CD4-positive, alpha-beta memory T cell (primary cell): ENCODE measurements at regions of chr6 and their contacts with region 1.

Region 1: GRCh38 chr6:152184917-152185574 is 377.6 kb downstream of the ESR1 start:
- DNase-seq: peak; percentile 46 to 66 (median 62)
- H3K4me3 ChIP-seq: peak overlapping the region; percentile 39 to 76
- H3K4me3 Mint-ChIP-seq: peak overlapping the region; percentile 87 to 98 (median 96)
- H3K27ac ChIP-seq: peak overlapping the region; percentile 77
- H3K27ac Mint-ChIP-seq: peak overlapping the region; percentile 90 to 99 (median 98)
- H3K4me1 ChIP-seq: peaks cover 54% of the 10 kb centered on the region
- H3K4me1 Mint-ChIP-seq: peaks cover 50 to 85% (median 68%) of the 10 kb centered on the region in 4 donors
- H3K27me3 ChIP-seq: no peaks in the 10 kb centered on the region
- H3K27me3 Mint-ChIP-seq: no peaks in the 10 kb centered on the region

Region 2: DNA sequence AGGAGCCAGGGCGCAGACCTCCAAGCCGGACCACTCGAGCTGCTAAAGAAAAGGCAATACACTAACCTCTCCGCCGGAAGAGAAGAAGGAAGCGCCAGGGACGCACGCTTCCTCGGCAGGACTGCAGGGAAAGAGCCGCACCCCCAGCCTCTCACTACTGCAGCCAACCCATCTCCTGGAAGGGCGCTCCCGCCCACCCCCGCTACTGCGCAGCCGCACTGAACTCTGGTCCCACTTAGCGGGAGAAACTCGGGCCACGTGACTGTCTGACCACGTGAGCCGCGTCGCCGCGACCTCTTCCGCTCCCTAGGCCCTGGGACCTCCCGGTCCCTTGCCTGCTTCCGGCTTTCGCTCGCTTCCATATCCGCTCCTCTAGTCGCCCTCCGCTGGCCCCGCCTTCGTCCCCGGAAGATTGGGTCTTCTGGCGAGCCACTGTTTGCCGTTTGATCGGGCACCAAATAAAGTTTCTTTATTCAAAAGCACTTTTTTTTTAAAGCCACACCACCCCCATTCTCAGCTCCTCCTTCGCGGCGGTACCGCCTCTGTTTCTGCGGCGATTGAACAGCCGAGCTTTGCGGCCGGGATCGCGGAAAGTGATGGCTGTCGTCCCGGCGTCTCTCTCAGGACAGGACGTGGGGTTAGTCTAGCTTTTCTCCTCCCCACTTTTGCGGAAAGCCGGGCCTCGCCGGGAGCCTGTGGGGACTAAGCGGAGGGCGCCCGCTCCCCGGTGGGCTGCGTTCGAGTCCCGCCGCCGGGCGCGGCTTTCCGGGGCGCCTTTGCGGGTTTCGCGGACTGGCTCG is 732.9 kb before region 1 on chr6 and contains the start of gene RMND1:
- CTCF ChIA-PET with region 1: no interaction called
- POLR2A ChIA-PET with region 1: interaction called, 10 read pairs
- intact Hi-C with region 1: no loop called
- DNase-seq: peak; percentile 98 to 100 (median 99)
- H3K4me3 ChIP-seq: peak within 1 kb of the TSS; percentile 85 to 99
- H3K4me3 Mint-ChIP-seq: peak within 1 kb of the TSS; percentile 91 to 98 (median 97)
- H3K27ac ChIP-seq: peak within 1 kb of the TSS; percentile 72
- H3K27ac Mint-ChIP-seq: peak within 1 kb of the TSS; percentile 93 to 99 (median 96)
- H3K4me1 ChIP-seq: peaks cover 32% of the 10 kb centered on the region
- H3K4me1 Mint-ChIP-seq: peaks cover 27 to 68% (median 53%) of the 10 kb centered on the region in 4 donors
- H3K27me3 ChIP-seq: no peaks in the 10 kb centered on the region
- H3K27me3 Mint-ChIP-seq: peaks cover 0 to 2% of the 10 kb centered on the region in 2 donors
- total RNA-seq, gene RMND1: 17.0 to 17.5 TPM

Region 3: DNA sequence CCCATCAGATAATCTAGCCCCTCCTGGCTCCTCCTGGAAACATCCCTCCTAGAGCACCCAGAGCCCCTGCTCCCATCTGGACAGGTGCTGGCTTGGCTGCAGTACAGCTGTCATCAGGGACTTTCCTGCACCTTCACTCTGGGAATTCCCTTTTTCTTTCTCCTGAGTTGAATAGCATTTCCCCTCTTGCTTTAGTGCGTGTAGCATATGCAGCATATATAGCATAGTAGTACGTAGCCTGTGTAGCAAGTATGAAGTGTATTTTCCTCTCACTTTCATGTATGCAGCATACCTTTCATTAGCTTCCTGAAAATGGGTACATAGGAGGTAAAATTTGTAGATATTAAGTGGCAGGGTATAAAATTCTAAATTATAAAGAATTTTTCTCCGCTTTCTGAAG is 24.7 kb before region 1 on chr6:
- CTCF ChIA-PET with region 1: no interaction called
- POLR2A ChIA-PET with region 1: interaction called, 31 read pairs
- intact Hi-C with region 1: no loop called
- DNase-seq: peak in 2 of 5 donors; percentile 5 to 37
- H3K4me3 ChIP-seq: no peak overlapping the region
- H3K4me3 Mint-ChIP-seq: no peak overlapping the region
- H3K27ac ChIP-seq: no peak overlapping the region
- H3K27ac Mint-ChIP-seq: peak overlapping the region; percentile 35 to 92 (median 87)
- H3K4me1 ChIP-seq: peaks cover 6% of the 10 kb centered on the region
- H3K4me1 Mint-ChIP-seq: peaks cover 19 to 30% (median 23%) of the 10 kb centered on the region in 4 donors
- H3K27me3 ChIP-seq: no peaks in the 10 kb centered on the region
- H3K27me3 Mint-ChIP-seq: no peaks in the 10 kb centered on the region

Region 4: GRCh38 chr6:152195896-152196295 is 10.8 kb after region 1 on chr6:
- CTCF ChIA-PET with region 1: interaction called, 6 read pairs
- POLR2A ChIA-PET with region 1: interaction called, 20 read pairs
- intact Hi-C with region 1: loop called (anchors 2 kb)
- DNase-seq: no peak
- H3K4me3 ChIP-seq: no peak overlapping the region
- H3K4me3 Mint-ChIP-seq: no peak overlapping the region
- H3K27ac ChIP-seq: no peak overlapping the region
- H3K27ac Mint-ChIP-seq: peak overlapping the region in 4 of 7 donors; percentile 48 to 69 (median 60)
- H3K4me1 ChIP-seq: no peaks in the 10 kb centered on the region
- H3K4me1 Mint-ChIP-seq: peaks cover 7 to 26% (median 14%) of the 10 kb centered on the region in 4 donors
- H3K27me3 ChIP-seq: no peaks in the 10 kb centered on the region
- H3K27me3 Mint-ChIP-seq: no peaks in the 10 kb centered on the region

Region 5: GRCh38 chr6:152206072-152206818 is 21.2 kb after region 1 on chr6:
- CTCF ChIA-PET with region 1: interaction called, 5 read pairs
- POLR2A ChIA-PET with region 1: interaction called, 20 read pairs
- intact Hi-C with region 1: no loop called
- DNase-seq: peak in 4 of 5 donors; percentile 33 to 44 (median 36)
- H3K4me3 ChIP-seq: no peak overlapping the region
- H3K4me3 Mint-ChIP-seq: no peak overlapping the region
- H3K27ac ChIP-seq: no peak overlapping the region
- H3K27ac Mint-ChIP-seq: peak overlapping the region in 5 of 7 donors; percentile 9 to 77 (median 16)
- H3K4me1 ChIP-seq: no peaks in the 10 kb centered on the region
- H3K4me1 Mint-ChIP-seq: peaks cover 3 to 10% (median 6%) of the 10 kb centered on the region in 4 donors
- H3K27me3 ChIP-seq: no peaks in the 10 kb centered on the region
- H3K27me3 Mint-ChIP-seq: no peaks in the 10 kb centered on the region

Region 6: GRCh38 chr6:152232501-152233151 is 47.6 kb after region 1 on chr6:
- CTCF ChIA-PET with region 1: interaction called, 18 read pairs
- POLR2A ChIA-PET with region 1: interaction called, 66 read pairs
- intact Hi-C with region 1: loop called (anchors 1 kb)
- DNase-seq: peak in 2 of 5 donors; percentile 2 to 12
- H3K4me3 ChIP-seq: no peak overlapping the region
- H3K4me3 Mint-ChIP-seq: peak overlapping the region; percentile 65 to 82 (median 76)
- H3K27ac ChIP-seq: no peak overlapping the region
- H3K27ac Mint-ChIP-seq: peak overlapping the region; percentile 72 to 93 (median 90)
- H3K4me1 ChIP-seq: peaks cover 22% of the 10 kb centered on the region
- H3K4me1 Mint-ChIP-seq: peaks cover 19 to 32% (median 24%) of the 10 kb centered on the region in 4 donors
- H3K27me3 ChIP-seq: no peaks in the 10 kb centered on the region
- H3K27me3 Mint-ChIP-seq: no peaks in the 10 kb centered on the region